IMR-90 (cell line): ENCODE measurements at regions of chr2 and their contacts with region 1.

Region 1: GRCh38 chr2:202033321-202034248 is at the start of gene FZD7:
- DNase-seq: peak; percentile 92
- ATAC-seq: peak; percentile 73
- H3K4me3 ChIP-seq: peak within 1 kb of the TSS; percentile 94
- H3K27ac ChIP-seq: peak within 1 kb of the TSS; percentile 98
- H3K4me1 ChIP-seq: peaks cover 6% of the 10 kb centered on the region
- H3K27me3 ChIP-seq: no peaks in the 10 kb centered on the region
- CTCF ChIP-seq: 0 out of 2 replicates have a peak, but pooled peaks have one; percentile 0
- POLR2A ChIP-seq: peak; percentile 73
- RAD21 ChIP-seq: peak; percentile 24
- total RNA-seq, gene FZD7: 62.4 and 81.1 TPM in 2 replicates

Region 2: DNA sequence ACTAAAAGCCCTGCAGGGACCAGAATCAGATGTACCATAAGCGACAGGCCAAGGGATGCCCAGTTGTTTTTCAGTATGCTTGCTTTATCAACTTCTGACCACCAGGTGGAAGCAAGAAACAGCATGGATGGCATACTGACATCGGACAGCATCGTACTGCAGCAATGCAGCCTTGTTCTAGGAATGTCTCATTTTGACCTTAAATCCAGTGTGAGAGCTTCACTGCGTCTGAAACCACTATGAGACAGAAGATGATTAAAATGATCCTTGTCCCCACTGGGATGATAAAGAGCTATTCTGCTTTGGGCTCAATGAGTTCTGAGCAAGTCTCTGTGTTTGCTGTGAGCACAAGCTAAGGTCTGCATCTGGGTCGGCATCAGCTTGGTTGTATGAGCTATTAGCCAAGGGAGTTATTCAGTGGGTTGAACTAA is 172.9 kb before region 1 on chr2:
- CTCF ChIA-PET with region 1: interaction called, 4 read pairs
- POLR2A ChIA-PET with region 1: interaction called, 4 read pairs
- dilution Hi-C with region 1: no loop called
- in situ Hi-C with region 1: loop called (anchors 5 kb)
- intact Hi-C with region 1: loop called (anchors 1 kb)
- DNase-seq: peak; percentile 93
- ATAC-seq: peak; percentile 83
- H3K4me3 ChIP-seq: no peak overlapping the region
- H3K27ac ChIP-seq: peak overlapping the region; percentile 68; the same call in 1 of the 2 replicates
- H3K4me1 ChIP-seq: peaks cover 26% of the 10 kb centered on the region
- H3K27me3 ChIP-seq: no peaks in the 10 kb centered on the region
- CTCF ChIP-seq: peak; percentile 80
- POLR2A ChIP-seq: 0 out of 2 replicates have a peak, but pooled peaks have one; percentile 43
- RAD21 ChIP-seq: peak; percentile 98

Region 3: GRCh38 chr2:201909961-201910361 is 123.6 kb before region 1 on chr2:
- CTCF ChIA-PET with region 1: no interaction called
- POLR2A ChIA-PET with region 1: no interaction called
- dilution Hi-C with region 1: no loop called
- in situ Hi-C with region 1: no loop called
- intact Hi-C with region 1: loop called (anchors 2 kb)
- DNase-seq: peak; percentile 80
- ATAC-seq: peak; percentile 53
- H3K4me3 ChIP-seq: peak overlapping the region; percentile 42
- H3K27ac ChIP-seq: peak overlapping the region; percentile 76
- H3K4me1 ChIP-seq: peaks cover 11% of the 10 kb centered on the region
- H3K27me3 ChIP-seq: no peaks in the 10 kb centered on the region
- CTCF ChIP-seq: no peak
- POLR2A ChIP-seq: no peak
- RAD21 ChIP-seq: no peak

Region 4: GRCh38 chr2:201971531-201972228 is 61.9 kb before region 1 on chr2:
- CTCF ChIA-PET with region 1: no interaction called
- POLR2A ChIA-PET with region 1: no interaction called
- dilution Hi-C with region 1: no loop called
- in situ Hi-C with region 1: no loop called
- intact Hi-C with region 1: loop called (anchors 5 kb)
- DNase-seq: peak; percentile 53
- ATAC-seq: peak; percentile 10; the same call in 1 of the 2 replicates
- H3K4me3 ChIP-seq: no peak overlapping the region
- H3K27ac ChIP-seq: no peak overlapping the region
- H3K4me1 ChIP-seq: peaks cover 15% of the 10 kb centered on the region
- H3K27me3 ChIP-seq: no peaks in the 10 kb centered on the region
- CTCF ChIP-seq: no peak
- POLR2A ChIP-seq: no peak
- RAD21 ChIP-seq: no peak

Region 5: DNA sequence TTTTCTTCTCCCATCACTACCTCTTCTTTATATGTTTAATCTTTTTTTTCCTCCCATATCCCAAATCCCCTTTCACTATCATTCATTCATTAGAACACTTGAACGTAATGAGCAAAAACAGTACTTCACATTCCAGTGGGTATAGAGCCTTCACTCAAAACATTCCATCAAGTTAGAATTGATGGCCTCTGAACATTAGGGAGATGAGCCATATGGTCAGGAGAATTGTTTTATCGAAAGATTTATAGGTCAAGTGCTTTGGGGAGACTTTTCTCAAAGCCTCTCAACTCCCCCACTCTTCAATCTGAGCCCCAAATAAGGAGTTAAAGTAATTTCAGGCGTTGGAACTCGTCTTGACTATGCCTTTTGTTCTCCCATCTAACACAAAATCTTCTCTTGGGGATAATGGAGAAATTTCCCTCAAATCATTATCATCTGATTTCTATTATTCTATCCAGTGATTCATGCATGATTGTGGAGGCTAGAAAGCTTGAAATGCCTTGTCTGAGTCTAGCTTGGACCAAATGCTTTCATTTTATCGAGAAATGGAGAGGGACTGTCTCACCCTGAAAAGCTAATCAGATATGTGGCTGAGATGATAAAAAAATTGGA is 118.6 kb after region 1 on chr2:
- CTCF ChIA-PET with region 1: no interaction called
- POLR2A ChIA-PET with region 1: no interaction called
- dilution Hi-C with region 1: no loop called
- in situ Hi-C with region 1: no loop called
- intact Hi-C with region 1: no loop called
- DNase-seq: peak; percentile 67
- ATAC-seq: no peak
- H3K4me3 ChIP-seq: no peak overlapping the region
- H3K27ac ChIP-seq: no peak overlapping the region
- H3K4me1 ChIP-seq: peaks cover 25% of the 10 kb centered on the region
- H3K27me3 ChIP-seq: no peaks in the 10 kb centered on the region
- CTCF ChIP-seq: no peak
- POLR2A ChIP-seq: no peak
- RAD21 ChIP-seq: no peak

Region 6: DNA sequence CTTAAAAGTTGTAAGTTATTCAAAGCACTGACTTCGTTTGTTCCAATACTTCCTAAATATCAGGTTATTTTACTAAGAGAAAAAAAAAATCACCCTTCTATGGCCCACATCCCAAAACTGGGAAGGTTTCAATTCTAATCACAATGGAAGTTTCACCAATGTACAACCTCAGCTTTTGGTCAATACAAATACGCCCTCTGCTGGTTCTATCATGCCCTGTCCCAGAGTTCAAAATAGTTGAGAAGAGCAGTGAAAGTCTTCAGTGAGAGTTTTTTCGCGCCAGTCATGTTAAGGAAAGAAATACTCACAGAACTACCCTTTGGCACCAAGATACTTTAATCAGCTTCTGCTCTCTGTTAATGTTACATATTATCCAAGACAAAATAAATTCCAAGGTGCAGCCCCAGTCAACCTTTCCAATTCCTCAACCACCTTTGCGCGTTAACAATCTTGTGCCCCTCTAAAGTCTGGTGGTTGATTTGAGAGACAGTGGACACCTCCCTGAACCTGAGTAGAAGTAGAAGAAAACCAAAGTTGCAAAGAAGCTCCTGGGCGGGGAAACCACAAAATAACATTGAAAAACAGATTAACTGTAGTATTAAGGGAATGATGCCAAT is 144.9 kb after region 1 on chr2:
- CTCF ChIA-PET with region 1: no interaction called
- POLR2A ChIA-PET with region 1: interaction called, 3 read pairs
- dilution Hi-C with region 1: no loop called
- in situ Hi-C with region 1: loop called (anchors 5 kb)
- intact Hi-C with region 1: loop called (anchors 1 kb)
- DNase-seq: peak; percentile 79
- ATAC-seq: peak; percentile 94
- H3K4me3 ChIP-seq: no peak overlapping the region
- H3K27ac ChIP-seq: no peak overlapping the region
- H3K4me1 ChIP-seq: peaks cover 2% of the 10 kb centered on the region; the same call in 1 of the 2 replicates
- H3K27me3 ChIP-seq: no peaks in the 10 kb centered on the region
- CTCF ChIP-seq: peak; percentile 89
- POLR2A ChIP-seq: peak; percentile 44; the same call in 1 of the 2 replicates
- RAD21 ChIP-seq: peak; percentile 94

Region 7: DNA sequence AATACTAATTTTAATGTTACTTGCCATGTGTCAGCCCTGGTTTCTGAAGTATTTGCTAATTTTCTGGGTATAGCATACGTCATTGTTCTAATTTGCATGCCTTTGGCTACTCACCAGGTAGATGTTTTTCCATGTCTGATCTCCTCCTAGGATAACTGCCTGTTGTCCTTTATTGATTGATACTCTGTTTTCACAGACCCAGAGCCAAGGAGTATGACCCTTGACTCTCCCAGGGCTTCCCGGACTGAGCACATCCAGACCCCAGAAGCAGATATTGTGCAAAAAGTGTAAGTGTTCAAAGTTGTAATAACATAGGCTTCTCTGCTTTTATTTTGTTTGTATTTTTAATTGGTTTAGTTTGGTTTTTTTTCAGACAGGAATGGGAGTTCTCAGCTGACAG is 151.0 kb after region 1 on chr2:
- CTCF ChIA-PET with region 1: no interaction called
- POLR2A ChIA-PET with region 1: interaction called, 3 read pairs
- dilution Hi-C with region 1: no loop called
- in situ Hi-C with region 1: loop called (anchors 5 kb)
- intact Hi-C with region 1: no loop called
- DNase-seq: no peak
- ATAC-seq: no peak
- H3K4me3 ChIP-seq: no peak overlapping the region
- H3K27ac ChIP-seq: no peak overlapping the region
- H3K4me1 ChIP-seq: peaks cover 10% of the 10 kb centered on the region
- H3K27me3 ChIP-seq: no peaks in the 10 kb centered on the region
- CTCF ChIP-seq: no peak
- POLR2A ChIP-seq: no peak
- RAD21 ChIP-seq: no peak

Region 8: GRCh38 chr2:202278944-202279343 is 245.4 kb after region 1 on chr2:
- CTCF ChIA-PET with region 1: no interaction called
- POLR2A ChIA-PET with region 1: no interaction called
- dilution Hi-C with region 1: no loop called
- in situ Hi-C with region 1: no loop called
- intact Hi-C with region 1: no loop called
- DNase-seq: peak; percentile 78
- ATAC-seq: peak; percentile 73
- H3K4me3 ChIP-seq: no peak overlapping the region
- H3K27ac ChIP-seq: no peak overlapping the region
- H3K4me1 ChIP-seq: peaks cover 4% of the 10 kb centered on the region
- H3K27me3 ChIP-seq: no peaks in the 10 kb centered on the region
- CTCF ChIP-seq: peak; percentile 67
- POLR2A ChIP-seq: no peak
- RAD21 ChIP-seq: peak; percentile 66